ENCODE measurements at regions of chr2 and their contacts with region 1.

Region 1: DNA sequence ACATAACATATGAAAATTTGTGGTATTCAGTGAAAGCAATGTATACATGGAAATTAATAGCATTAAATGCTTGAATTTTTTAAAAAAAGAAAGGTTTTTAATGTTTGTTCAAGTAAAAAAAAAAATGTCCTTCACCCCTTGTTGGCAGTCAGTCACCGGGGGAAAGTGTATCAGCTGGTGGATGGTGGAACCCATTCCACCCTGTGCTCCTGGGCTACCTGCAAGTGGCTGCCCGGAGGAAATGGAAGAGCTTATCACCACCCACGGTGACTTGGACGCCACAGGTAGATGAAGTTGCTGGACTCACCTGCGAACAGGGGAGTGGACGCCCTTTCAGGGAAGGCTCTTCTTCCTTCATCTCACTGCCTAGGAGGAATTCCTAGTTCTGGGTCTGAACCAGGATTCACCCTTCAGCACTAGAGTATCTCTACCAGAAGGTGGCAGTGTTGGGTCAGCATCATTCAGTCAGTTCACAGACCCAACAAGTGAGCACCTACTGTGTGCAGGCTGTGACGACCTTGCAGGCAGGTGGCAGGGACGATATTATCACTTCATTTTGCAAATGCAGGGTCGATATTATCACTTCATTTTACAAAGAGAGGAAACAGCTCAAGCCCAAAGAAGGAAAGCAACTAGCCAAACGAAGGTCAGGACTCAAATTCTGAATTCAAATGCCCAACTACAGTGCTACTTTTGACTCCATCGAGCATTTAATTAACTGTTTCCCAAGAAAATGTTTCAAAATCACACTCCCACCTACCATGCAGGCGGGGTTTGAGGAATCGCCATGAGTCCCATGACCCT is 35.8 kb downstream of the CIB4 start:
- H3K4me3 Mint-ChIP-seq: no peak overlapping the region
- H3K27ac Mint-ChIP-seq: no peak overlapping the region
- H3K4me1 Mint-ChIP-seq: no peaks in the 10 kb centered on the region
- H3K27me3 Mint-ChIP-seq: peaks cover 24% of the 10 kb centered on the region

Region 2: GRCh38 chr2:26623541-26624396 is 18.4 kb after region 1 on chr2:
- intact Hi-C with region 1: no loop called
- H3K4me3 Mint-ChIP-seq: no peak overlapping the region
- H3K27ac Mint-ChIP-seq: no peak overlapping the region
- H3K4me1 Mint-ChIP-seq: peaks cover 9% of the 10 kb centered on the region
- H3K27me3 Mint-ChIP-seq: peaks cover 25% of the 10 kb centered on the region

Region 3: DNA sequence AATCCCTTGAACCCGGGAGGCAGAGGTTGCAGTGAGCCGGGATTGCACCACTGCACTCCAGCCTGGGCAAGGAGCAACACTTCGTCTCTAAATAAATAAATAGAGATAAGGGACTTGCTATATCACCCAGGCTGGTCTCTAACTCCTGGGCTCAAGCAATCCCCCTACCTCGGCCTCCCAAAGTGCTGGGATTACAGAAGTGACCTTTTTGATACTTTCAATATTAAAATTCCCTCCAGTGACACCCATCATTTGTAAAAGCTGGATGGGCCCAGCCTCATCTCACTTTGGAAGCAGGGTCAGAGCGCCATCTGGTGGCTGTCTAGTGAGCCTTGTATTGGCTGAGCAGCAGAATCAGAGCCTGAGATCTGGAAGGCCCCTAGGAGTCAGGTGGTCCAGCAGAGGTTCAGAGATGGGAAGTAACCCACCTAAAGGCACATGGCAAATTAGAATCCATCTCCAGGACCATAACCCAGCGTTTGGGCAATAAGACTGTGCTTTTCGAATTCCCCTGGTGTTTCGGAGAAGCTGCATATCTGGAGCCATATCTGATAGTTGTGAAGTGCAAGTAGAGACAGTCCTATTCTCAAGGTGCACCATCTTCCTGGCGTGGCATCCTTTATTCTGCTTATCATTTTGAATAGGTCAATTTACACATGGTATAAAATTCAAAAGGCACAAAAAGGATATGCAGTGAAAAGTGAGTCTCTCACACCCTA is 140.4 kb after region 1 on chr2:
- intact Hi-C with region 1: loop called (anchors 1 kb)
- H3K4me3 Mint-ChIP-seq: no peak overlapping the region
- H3K27ac Mint-ChIP-seq: no peak overlapping the region
- H3K4me1 Mint-ChIP-seq: peaks cover 10% of the 10 kb centered on the region
- H3K27me3 Mint-ChIP-seq: peaks cover 12% of the 10 kb centered on the region

Region 4: GRCh38 chr2:26820932-26821331 is 215.5 kb after region 1 on chr2:
- intact Hi-C with region 1: no loop called
- H3K4me3 Mint-ChIP-seq: no peak overlapping the region
- H3K27ac Mint-ChIP-seq: no peak overlapping the region
- H3K4me1 Mint-ChIP-seq: peaks cover 6% of the 10 kb centered on the region
- H3K27me3 Mint-ChIP-seq: peaks cover 16% of the 10 kb centered on the region

Region 5: DNA sequence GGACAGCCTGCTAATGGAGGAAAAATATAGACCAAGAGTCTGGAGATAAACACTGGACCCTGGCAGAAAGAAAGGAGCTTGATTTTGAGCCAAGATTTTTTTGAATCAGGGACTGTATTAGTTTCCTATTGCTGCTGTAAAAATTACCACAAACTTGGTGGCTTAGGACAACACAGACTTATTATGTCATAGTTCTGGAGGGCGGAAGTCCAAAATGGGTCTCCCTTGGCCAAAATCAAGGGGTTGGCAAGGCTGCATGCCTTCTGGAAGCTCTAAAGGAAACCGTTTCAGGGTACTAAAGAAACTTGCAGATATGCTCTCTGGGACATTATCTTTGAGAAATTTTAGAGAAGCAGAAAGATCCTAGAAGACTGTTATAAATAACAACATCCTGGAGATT is 1425.2 kb after region 1 on chr2:
- intact Hi-C with region 1: no loop called
- H3K4me3 Mint-ChIP-seq: no peak overlapping the region
- H3K27ac Mint-ChIP-seq: no peak overlapping the region
- H3K4me1 Mint-ChIP-seq: peaks cover 10% of the 10 kb centered on the region
- H3K27me3 Mint-ChIP-seq: no peaks in the 10 kb centered on the region